Activated CD4-positive, alpha-beta T cell treated with anti-CD3 and anti-CD28 coated beads, Interleukin-2, amount 10 ng/mL, durations not matched to agents 24 days and 14 days (primary cell): ENCODE measurements at regions of chr11 and their contacts with region 1.

Region 1: GRCh38 chr11:96075532-96075959 is 151.6 kb upstream of the MTMR2 start:
- DNase-seq: no peak
- H3K4me3 Mint-ChIP-seq: peak overlapping the region; percentile 47
- H3K27ac Mint-ChIP-seq: peak overlapping the region; percentile 58
- H3K4me1 Mint-ChIP-seq: peaks cover 51% of the 10 kb centered on the region
- H3K27me3 Mint-ChIP-seq: no peaks in the 10 kb centered on the region

Region 2: GRCh38 chr11:95345651-95346050 is 729.9 kb before region 1 on chr11:
- intact Hi-C with region 1: no loop called
- DNase-seq: peak; percentile 57
- H3K4me3 Mint-ChIP-seq: peak overlapping the region; percentile 48
- H3K27ac Mint-ChIP-seq: peak overlapping the region; percentile 50
- H3K4me1 Mint-ChIP-seq: peaks cover 30% of the 10 kb centered on the region
- H3K27me3 Mint-ChIP-seq: peaks cover 9% of the 10 kb centered on the region

Region 3: GRCh38 chr11:96112201-96113128 is 36.9 kb after region 1 on chr11:
- intact Hi-C with region 1: loop called (anchors 5 kb)
- DNase-seq: peak; percentile 65
- H3K4me3 Mint-ChIP-seq: peak overlapping the region; percentile 28
- H3K27ac Mint-ChIP-seq: peak overlapping the region; percentile 74
- H3K4me1 Mint-ChIP-seq: peaks cover 21% of the 10 kb centered on the region
- H3K27me3 Mint-ChIP-seq: no peaks in the 10 kb centered on the region

Region 4: GRCh38 chr11:96134602-96135001 is 59.1 kb after region 1 on chr11:
- intact Hi-C with region 1: loop called (anchors 5 kb)
- DNase-seq: no peak
- H3K4me3 Mint-ChIP-seq: no peak overlapping the region
- H3K27ac Mint-ChIP-seq: no peak overlapping the region
- H3K4me1 Mint-ChIP-seq: peaks cover 35% of the 10 kb centered on the region
- H3K27me3 Mint-ChIP-seq: no peaks in the 10 kb centered on the region

Region 5: GRCh38 chr11:96155627-96156378 is 80.3 kb after region 1 on chr11:
- intact Hi-C with region 1: loop called (anchors 1 kb)
- DNase-seq: peak; percentile 79
- H3K4me3 Mint-ChIP-seq: peak overlapping the region; percentile 65
- H3K27ac Mint-ChIP-seq: peak overlapping the region; percentile 95
- H3K4me1 Mint-ChIP-seq: peaks cover 54% of the 10 kb centered on the region
- H3K27me3 Mint-ChIP-seq: no peaks in the 10 kb centered on the region